Dorsolateral prefrontal cortex (tissue), 120 donors: ENCODE measurements at regions of chr11 and their contacts with region 1.

Region 1: GRCh38 chr11:119181677-119182412 is 3.4 kb upstream of the NHERF4 start:
- DNase-seq: no peak
- H3K4me3 ChIP-seq: no peak overlapping the region
- H3K27ac ChIP-seq: no peak overlapping the region
- H3K27me3 ChIP-seq: no peaks in the 10 kb centered on the region
- CTCF ChIP-seq: no peak

Region 2: DNA sequence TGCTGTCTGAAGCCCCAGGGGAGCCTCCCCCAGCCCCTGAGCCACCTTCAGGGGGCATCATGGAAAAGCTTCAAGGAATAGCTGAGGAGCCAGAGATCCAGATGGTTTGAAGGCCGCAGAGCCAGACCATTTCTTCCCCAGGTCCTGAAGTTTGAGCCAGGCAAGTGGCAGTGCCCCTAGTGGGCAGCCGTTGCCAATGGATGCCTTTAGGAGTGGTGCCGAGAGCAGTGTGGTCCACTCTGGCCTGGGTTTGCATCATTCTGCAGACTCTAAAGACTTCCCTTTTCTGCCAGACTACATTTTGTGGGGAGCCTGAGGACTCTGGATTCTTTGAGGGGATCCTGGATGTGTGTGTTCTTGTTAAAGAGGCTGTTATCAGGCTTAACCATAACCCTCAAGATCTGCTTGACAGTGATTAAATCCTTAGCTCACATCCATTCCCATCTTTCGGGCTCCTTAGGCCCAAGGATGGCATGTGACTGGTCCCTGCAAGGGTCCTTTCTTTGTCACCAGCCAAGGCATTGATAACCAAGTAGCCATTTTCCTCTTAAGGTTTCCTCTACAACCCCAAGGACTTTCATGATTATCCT is 47.4 kb before region 1 on chr11:
- intact Hi-C with region 1: loop called in 1 of 2 experiments (anchors 10 kb)
- DNase-seq: no peak
- H3K4me3 ChIP-seq: no peak overlapping the region
- H3K27ac ChIP-seq: peak overlapping the region in 3 of 59 donors; percentile 3 to 32 (median 6)
- H3K27me3 ChIP-seq: no peaks in the 10 kb centered on the region
- CTCF ChIP-seq: peak in 46 of 56 donors; percentile 15 to 64 (median 36)

Region 3: GRCh38 chr11:119222308-119222707 is 40.5 kb after region 1 on chr11:
- intact Hi-C with region 1: no loop called
- DNase-seq: peak in 1 of 10 donors; percentile 20
- H3K4me3 ChIP-seq: peak overlapping the region in 1 of 59 donors; percentile 15
- H3K27ac ChIP-seq: peak overlapping the region in 54 of 59 donors; percentile 2 to 82 (median 63)
- H3K27me3 ChIP-seq: no peaks in the 10 kb centered on the region
- CTCF ChIP-seq: peak in 4 of 56 donors; percentile 4 to 38 (median 20)